ENCODE measurements at regions of chr16 and their contacts with region 1.

Region 1: DNA sequence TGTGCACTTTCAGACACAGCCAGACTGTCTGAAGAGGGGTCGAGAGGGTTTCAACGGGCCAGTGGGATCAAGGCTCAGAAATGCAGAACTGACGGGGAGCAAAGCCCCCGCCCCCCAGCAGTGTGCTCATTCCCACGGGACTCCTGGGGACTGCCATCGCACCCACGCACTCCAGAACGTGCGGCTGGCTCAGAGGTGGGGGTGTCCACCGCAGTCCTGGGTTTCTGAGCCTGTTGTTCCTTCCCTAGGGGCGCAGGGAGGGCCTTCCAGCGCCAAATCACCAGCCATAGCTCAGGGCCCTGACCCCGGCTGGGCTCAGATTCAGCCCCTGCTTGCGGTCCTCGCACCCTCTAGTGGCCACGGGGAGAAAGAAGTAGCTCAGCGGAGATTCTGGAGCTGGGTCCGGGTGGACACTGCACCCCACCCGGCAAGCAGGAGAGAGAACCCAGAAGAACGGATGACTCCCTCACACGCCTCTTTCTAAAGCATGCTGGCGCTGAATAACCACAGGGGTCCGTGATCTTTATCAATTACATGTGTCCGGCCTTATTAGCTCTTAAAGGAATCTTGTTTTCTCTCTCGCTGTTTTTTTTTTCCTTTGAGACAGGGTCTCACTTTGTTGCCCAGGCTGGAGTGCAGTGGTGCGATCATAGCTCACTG is 45.0 kb upstream of the USP7 start:
- DNase-seq: peak; percentile 73
- ATAC-seq: peak; percentile 86 to 97 (median 92)
- H3K4me3 ChIP-seq: peak overlapping the region in 8 of 10 donors; percentile 7 to 52 (median 36)
- H3K27ac ChIP-seq: no peak overlapping the region
- H3K4me1 ChIP-seq: peaks cover 0 to 8% (median 7%) of the 10 kb centered on the region in 9 donors
- H3K27me3 ChIP-seq: peaks cover 0 to 16% (median 7%) of the 10 kb centered on the region in 7 donors
- CTCF ChIP-seq: peak; percentile 71 to 91 (median 85)

Region 2: GRCh38 chr16:8655184-8655717 is 353.5 kb before region 1 on chr16:
- intact Hi-C with region 1: loop called in 3 of 10 experiments (anchors 10 kb)
- DNase-seq: no peak
- ATAC-seq: peak in 2 of 8 donors; percentile 28 to 37
- H3K4me3 ChIP-seq: no peak overlapping the region
- H3K27ac ChIP-seq: no peak overlapping the region
- H3K4me1 ChIP-seq: no peaks in the 10 kb centered on the region
- H3K27me3 ChIP-seq: no peaks in the 10 kb centered on the region
- CTCF ChIP-seq: peak in 3 of 9 donors; percentile 22 to 60 (median 29)

Region 3: GRCh38 chr16:8905168-8905762 is 103.5 kb before region 1 on chr16:
- intact Hi-C with region 1: loop called in 4 of 10 experiments (anchors 5 to 10 kb)
- DNase-seq: no peak
- ATAC-seq: peak in 1 of 8 donors; percentile 38
- H3K4me3 ChIP-seq: no peak overlapping the region
- H3K27ac ChIP-seq: no peak overlapping the region
- H3K4me1 ChIP-seq: peaks cover 0 to 7% (median 0%) of the 10 kb centered on the region in 9 donors
- H3K27me3 ChIP-seq: no peaks in the 10 kb centered on the region
- CTCF ChIP-seq: peak in 6 of 9 donors; percentile 14 to 37 (median 28)

Region 4: GRCh38 chr16:8928467-8928957 is 80.2 kb before region 1 on chr16:
- intact Hi-C with region 1: loop called in 3 of 10 experiments (anchors 10 kb)
- DNase-seq: no peak
- ATAC-seq: peak in 6 of 8 donors; percentile 31 to 80 (median 50)
- H3K4me3 ChIP-seq: no peak overlapping the region
- H3K27ac ChIP-seq: no peak overlapping the region
- H3K4me1 ChIP-seq: peaks cover 8 to 57% (median 43%) of the 10 kb centered on the region in 9 donors
- H3K27me3 ChIP-seq: no peaks in the 10 kb centered on the region
- CTCF ChIP-seq: no peak

Region 5: GRCh38 chr16:8963825-8964441 is 44.8 kb before region 1 on chr16 and contains the start of gene USP7:
- intact Hi-C with region 1: loop called in 1 of 10 experiments (anchors 5 kb)
- DNase-seq: peak; percentile 94 to 95
- ATAC-seq: peak; percentile 92 to 97 (median 96)
- H3K4me3 ChIP-seq: peak within 1 kb of the TSS; percentile 69 to 96 (median 81)
- H3K27ac ChIP-seq: peak within 1 kb of the TSS; percentile 68 to 94 (median 85)
- H3K4me1 ChIP-seq: peaks cover 14 to 50% (median 39%) of the 10 kb centered on the region in 9 donors
- H3K27me3 ChIP-seq: no peaks in the 10 kb centered on the region
- CTCF ChIP-seq: peak in 1 of 9 donors; percentile 14
- total RNA-seq, gene USP7: 59.0 to 84.8 (median 67.1) TPM

Region 6: GRCh38 chr16:9090960-9091866 is 82.5 kb after region 1 on chr16 and contains the start of gene HAPSTR1:
- intact Hi-C with region 1: no loop called
- DNase-seq: peak; percentile 100
- ATAC-seq: peak; percentile 93 to 97 (median 96)
- H3K4me3 ChIP-seq: peak within 1 kb of the TSS; percentile 80 to 98 (median 94)
- H3K27ac ChIP-seq: peak within 1 kb of the TSS; percentile 96 to 100 (median 99)
- H3K4me1 ChIP-seq: peaks cover 14 to 47% (median 40%) of the 10 kb centered on the region in 9 donors
- H3K27me3 ChIP-seq: no peaks in the 10 kb centered on the region
- CTCF ChIP-seq: no peak
- total RNA-seq, gene HAPSTR1: 57.2 to 74.7 (median 64.1) TPM

Region 7: GRCh38 chr16:9134739-9135138 is 126.0 kb after region 1 on chr16:
- intact Hi-C with region 1: loop called in 1 of 10 experiments (anchors 10 kb)
- DNase-seq: peak; percentile 27 to 37
- ATAC-seq: peak; percentile 44 to 78 (median 64)
- H3K4me3 ChIP-seq: no peak overlapping the region
- H3K27ac ChIP-seq: no peak overlapping the region
- H3K4me1 ChIP-seq: peaks cover 0 to 17% (median 6%) of the 10 kb centered on the region in 9 donors
- H3K27me3 ChIP-seq: no peaks in the 10 kb centered on the region
- CTCF ChIP-seq: peak; percentile 9 to 66 (median 57)